Naive thymus-derived CD4-positive, alpha-beta T cell (primary cell): ENCODE measurements at regions of chr11 and their contacts with region 1.

Region 1: DNA sequence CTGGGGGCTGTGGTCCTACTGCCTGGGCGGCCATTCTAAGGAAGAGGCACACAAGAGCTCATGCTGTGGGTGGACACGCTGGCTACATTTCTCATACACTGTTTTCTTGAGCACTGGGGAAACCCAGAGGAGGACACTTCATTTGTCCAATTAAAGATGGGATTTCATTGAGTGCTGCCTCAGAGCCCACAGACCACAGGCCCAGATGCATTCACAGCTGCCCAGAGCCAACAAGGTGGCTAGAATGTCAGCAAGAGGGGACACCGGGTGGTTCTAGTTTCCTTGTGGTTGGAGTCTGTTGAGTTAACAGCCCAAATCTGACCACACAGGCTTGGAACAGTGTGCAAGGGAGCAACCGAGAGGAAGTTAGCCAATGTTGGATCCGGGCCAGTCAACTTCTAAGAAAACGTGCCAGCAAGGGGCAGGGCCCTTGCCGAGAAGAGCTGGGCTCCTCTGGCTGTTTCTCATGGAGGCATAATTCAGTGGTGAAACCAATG is 35.0 kb upstream of the SORL1 start:
- DNase-seq: peak; percentile 28 to 55 (median 40)
- ATAC-seq: peak; percentile 59
- H3K4me3 ChIP-seq: peak overlapping the region; percentile 20
- H3K4me3 Mint-ChIP-seq: peak overlapping the region; percentile 25 to 75 (median 62)
- H3K27ac ChIP-seq: peak overlapping the region; percentile 48
- H3K27ac Mint-ChIP-seq: peak overlapping the region; percentile 79 to 96 (median 89)
- H3K4me1 ChIP-seq: peaks cover 36 to 53% of the 10 kb centered on the region in 2 donors
- H3K4me1 Mint-ChIP-seq: peaks cover 47 to 82% (median 70%) of the 10 kb centered on the region in 7 donors
- H3K27me3 ChIP-seq: no peaks in the 10 kb centered on the region
- H3K27me3 Mint-ChIP-seq: no peaks in the 10 kb centered on the region

Region 2: DNA sequence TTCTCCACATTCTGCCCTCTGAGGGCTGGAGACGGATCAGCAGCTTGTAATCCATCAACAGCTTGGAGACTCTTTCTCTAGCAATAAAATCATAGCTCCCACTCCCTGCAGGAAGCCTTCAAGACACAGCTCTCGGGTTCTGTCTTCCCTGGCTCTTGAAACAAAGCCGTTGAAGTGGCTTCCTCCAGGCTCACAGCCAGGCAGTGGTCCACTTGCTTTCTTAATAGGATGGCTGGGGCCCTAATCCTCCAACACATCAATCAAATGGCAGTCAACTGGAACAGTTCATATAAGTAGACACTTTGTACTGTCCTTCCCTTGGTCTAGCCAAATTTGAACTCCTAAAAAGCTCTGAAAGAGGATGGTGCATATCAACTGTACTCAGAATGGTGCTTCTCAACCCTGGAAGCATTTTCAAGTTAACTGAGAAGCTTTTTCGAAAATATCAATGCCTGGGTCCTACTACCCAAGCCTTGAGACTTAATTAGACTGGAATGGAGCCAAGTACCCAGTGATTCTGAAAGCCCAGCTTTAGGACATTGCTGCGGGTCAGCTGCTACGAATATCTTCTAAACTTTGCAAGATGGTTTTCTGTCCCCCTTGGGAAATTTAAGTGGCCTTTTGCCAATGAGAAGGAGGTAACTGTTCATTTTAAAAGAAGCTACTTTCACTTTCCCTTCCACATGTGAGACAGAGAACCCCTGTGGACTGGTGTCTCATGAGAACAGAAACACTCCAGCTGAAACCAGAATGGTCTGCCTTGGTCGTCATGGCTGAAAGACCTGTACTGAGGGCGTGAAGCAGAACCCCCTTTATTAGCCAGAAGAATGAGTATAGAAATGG is 49.9 kb before region 1 on chr11:
- CTCF ChIA-PET with region 1: interaction called, 3 read pairs
- POLR2A ChIA-PET with region 1: interaction called, 4 read pairs
- intact Hi-C with region 1: loop called in 1 of 2 experiments (anchors 2 kb)
- DNase-seq: peak in 7 of 9 donors; percentile 40 to 65 (median 58)
- ATAC-seq: peak; percentile 74
- H3K4me3 ChIP-seq: peak overlapping the region; percentile 53
- H3K4me3 Mint-ChIP-seq: peak overlapping the region; percentile 68 to 94 (median 83)
- H3K27ac ChIP-seq: peak overlapping the region; percentile 55
- H3K27ac Mint-ChIP-seq: peak overlapping the region; percentile 76 to 98 (median 94)
- H3K4me1 ChIP-seq: peaks cover 15 to 33% of the 10 kb centered on the region in 2 donors
- H3K4me1 Mint-ChIP-seq: peaks cover 35 to 59% (median 45%) of the 10 kb centered on the region in 7 donors
- H3K27me3 ChIP-seq: no peaks in the 10 kb centered on the region
- H3K27me3 Mint-ChIP-seq: no peaks in the 10 kb centered on the region

Region 3: DNA sequence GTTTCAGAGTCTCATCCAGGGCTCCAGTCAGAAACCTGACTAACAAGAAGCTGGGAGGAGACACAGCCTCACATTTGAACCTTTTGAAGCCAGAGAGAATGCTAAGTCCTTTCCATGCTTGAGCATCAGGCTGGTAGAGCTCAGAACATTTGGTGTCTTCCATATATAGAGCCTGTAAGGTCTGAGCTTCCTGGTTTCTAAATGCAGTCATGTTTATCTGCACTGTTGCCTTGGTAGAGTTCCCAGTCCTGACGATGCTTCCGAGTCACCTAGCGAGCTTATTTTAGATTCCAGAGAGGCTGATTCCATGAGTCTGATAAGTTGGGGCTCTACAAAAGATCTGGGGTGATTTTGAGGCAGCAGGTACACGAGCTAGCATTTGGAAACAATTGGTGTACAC is 33.4 kb before region 1 on chr11:
- CTCF ChIA-PET with region 1: no interaction called
- POLR2A ChIA-PET with region 1: interaction called, 11 read pairs
- intact Hi-C with region 1: loop called in 1 of 2 experiments (anchors 2 kb)
- DNase-seq: no peak
- ATAC-seq: no peak
- H3K4me3 ChIP-seq: no peak overlapping the region
- H3K4me3 Mint-ChIP-seq: no peak overlapping the region
- H3K27ac ChIP-seq: no peak overlapping the region
- H3K27ac Mint-ChIP-seq: peak overlapping the region in 2 of 9 donors; percentile 16 to 47
- H3K4me1 ChIP-seq: peaks cover 1 to 10% of the 10 kb centered on the region in 2 donors
- H3K4me1 Mint-ChIP-seq: peaks cover 20 to 36% (median 30%) of the 10 kb centered on the region in 7 donors
- H3K27me3 ChIP-seq: no peaks in the 10 kb centered on the region
- H3K27me3 Mint-ChIP-seq: no peaks in the 10 kb centered on the region